ENCODE measurements at regions of chr12 and their contacts with region 1.

Region 1: GRCh38 chr12:29317556-29318363 is 63.2 kb downstream of the ERGIC2 start:
- DNase-seq: peak; percentile 23
- H3K4me3 Mint-ChIP-seq: no peak overlapping the region
- H3K27ac Mint-ChIP-seq: no peak overlapping the region
- H3K4me1 Mint-ChIP-seq: peaks cover 11% of the 10 kb centered on the region
- H3K27me3 Mint-ChIP-seq: peaks cover 3% of the 10 kb centered on the region

Region 2: GRCh38 chr12:29088611-29089219 is 229.0 kb before region 1 on chr12:
- intact Hi-C with region 1: loop called (anchors 1 kb)
- DNase-seq: no peak
- H3K4me3 Mint-ChIP-seq: no peak overlapping the region
- H3K27ac Mint-ChIP-seq: no peak overlapping the region
- H3K4me1 Mint-ChIP-seq: no peaks in the 10 kb centered on the region
- H3K27me3 Mint-ChIP-seq: peaks cover 36% of the 10 kb centered on the region

Measured in activated T-helper 1 cell treated with anti-CD3 and anti-CD28 coated beads, Interleukin-12 subunit alpha, Interleukin-12 subunit beta, Interleukin-2, Interleukin-4 antibody, amounts not matched to agents 30 ng/mL and 10 ng/mL and 1 ng/mL, durations not matched to agents 14 hours and 24 hours and 36 hours (primary cell).